ENCODE measurements at regions of chr12 and their contacts with region 1.

Region 1: DNA sequence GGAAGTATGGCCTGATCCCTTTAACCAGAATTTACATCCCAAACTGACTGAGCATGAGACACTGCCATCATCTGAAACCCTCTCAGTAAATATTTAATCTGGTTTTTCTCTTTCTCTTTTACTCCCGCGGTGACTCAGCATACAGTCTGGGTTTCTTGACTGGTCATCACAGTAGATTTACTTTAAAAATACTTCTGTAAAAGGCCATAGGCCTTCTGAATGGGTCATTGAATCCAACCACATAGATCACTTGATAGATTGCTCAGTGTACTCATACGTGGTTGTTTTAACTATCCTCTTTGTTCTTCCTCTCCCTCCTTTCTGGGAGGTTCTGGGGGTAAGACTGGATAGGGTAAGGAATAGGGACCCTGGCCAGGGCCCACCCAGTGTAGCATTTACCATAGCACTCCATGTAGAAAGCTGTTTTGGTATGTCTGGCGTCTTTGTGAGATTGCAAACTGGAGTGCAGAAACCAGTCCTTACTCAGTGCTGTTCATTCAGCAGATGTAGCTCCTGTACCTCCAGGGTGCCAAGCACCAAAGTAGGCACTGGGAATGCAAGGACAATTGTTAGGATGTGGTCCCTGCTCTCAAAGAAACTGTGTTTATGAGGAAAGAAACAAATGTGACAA is 165.7 kb downstream of the SRGAP1 start:
- DNase-seq: no peak
- H3K4me3 ChIP-seq: no peak overlapping the region
- CTCF ChIP-seq: no peak
- POLR2A ChIP-seq: no peak

Region 2: GRCh38 chr12:63949902-63950301 is 60.3 kb before region 1 on chr12:
- intact Hi-C with region 1: no loop called
- DNase-seq: no peak
- H3K4me3 ChIP-seq: no peak overlapping the region
- CTCF ChIP-seq: no peak
- POLR2A ChIP-seq: no peak

Region 3: DNA sequence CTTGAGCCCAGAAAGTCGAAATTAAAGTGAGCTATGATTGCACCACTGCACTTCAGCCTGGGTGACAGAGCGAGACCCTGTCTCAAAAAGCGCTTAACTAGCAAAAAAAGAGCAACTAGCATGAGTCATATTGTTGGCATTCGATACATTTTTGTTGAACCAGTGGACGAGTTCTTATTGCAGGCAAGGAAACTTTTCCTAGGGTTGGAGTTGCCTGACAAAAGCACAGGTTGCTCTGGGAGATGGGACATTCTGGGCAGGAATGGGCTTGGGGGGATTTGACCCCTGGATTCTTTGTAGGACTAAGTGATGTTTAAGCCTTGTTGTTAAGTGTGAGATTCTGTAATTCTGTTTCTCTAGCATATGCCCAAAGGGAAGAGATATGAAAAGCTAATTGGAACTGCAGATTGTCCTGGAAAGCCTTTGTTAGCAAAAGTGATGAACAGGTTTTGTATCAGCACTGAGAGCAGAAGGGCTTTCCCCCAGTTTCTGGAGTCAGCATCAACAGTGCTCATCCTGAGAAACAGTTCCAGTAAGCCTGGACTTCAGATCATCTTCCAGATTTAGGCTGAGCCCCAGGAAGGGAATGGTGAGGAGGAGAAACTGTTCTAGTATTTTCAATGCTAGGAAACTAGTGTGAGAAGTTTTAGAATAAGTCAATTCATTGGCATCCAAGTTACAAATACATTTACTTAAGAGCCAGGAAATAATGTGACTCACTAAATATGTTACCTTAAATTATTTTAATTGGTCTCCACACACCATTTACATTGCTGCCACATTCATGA is 42.6 kb before region 1 on chr12:
- intact Hi-C with region 1: loop called (anchors 10 kb)
- DNase-seq: no peak
- H3K4me3 ChIP-seq: no peak overlapping the region
- CTCF ChIP-seq: no peak
- POLR2A ChIP-seq: no peak

Region 4: DNA sequence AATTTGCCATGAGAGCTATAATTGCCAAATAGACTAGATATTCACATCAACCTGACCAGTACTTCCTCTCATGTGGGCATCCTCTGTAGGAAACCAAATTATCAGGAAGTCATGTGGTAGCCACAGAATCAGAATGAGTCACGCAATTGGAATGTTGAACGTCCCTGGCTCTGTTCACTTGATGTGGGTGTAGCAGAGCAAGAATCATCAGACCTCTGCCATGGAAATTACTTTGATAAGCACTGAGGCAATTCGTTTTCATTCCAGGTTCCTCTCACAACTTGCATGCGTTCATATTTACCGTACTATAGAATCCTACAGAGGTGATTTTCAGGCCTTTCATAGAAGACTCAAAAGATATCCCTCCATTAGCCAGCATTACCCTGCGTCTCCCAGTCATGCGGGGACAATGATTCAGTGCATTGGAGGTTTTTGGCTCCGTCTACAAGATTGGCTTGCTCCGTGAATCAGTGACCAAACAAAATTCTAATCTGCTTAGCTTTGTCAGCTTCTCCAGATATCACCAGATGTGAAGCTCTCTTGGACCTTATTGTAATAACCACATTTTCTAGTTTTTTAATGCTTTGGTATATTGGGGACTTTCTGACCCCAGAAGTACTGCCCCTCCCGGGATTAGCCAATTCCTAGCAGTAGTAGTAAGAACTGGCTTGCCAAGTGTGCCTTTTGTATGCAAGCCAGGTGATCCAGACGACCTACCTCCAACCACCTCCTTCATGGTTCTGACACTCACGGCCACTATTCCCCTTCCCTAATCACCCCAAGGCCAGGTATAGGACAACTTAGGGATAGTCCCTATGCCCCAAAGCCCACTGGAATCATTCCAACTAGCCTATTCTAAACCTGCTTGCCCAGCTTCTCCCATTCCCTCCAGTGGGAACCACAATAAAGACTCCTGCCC is 78.5 kb after region 1 on chr12:
- intact Hi-C with region 1: no loop called
- DNase-seq: peak in 1 of 2 donors; percentile 94
- H3K4me3 ChIP-seq: no peak overlapping the region
- CTCF ChIP-seq: no peak
- POLR2A ChIP-seq: no peak